ENCODE measurements at regions of chr15 and their contacts with region 1.

Region 1: GRCh38 chr15:66619151-66619903 is 53.5 kb upstream of the LCTL start:
- DNase-seq: peak; percentile 73 to 85 (median 77)
- ATAC-seq: peak; percentile 53 to 75 (median 72)
- H3K4me3 ChIP-seq: no peak overlapping the region
- H3K27ac ChIP-seq: peak overlapping the region in 11 of 12 donors; percentile 1 to 87 (median 70)
- H3K4me1 ChIP-seq: peaks cover 0 to 66% (median 38%) of the 10 kb centered on the region in 12 donors
- H3K27me3 ChIP-seq: peaks cover 0 to 10% (median 0%) of the 10 kb centered on the region in 9 donors
- CTCF ChIP-seq: peak; percentile 81 to 96 (median 92)
- POLR2A ChIP-seq: no peak

Region 2: GRCh38 chr15:66654739-66655375 is 35.5 kb after region 1 on chr15:
- intact Hi-C with region 1: loop called in 3 of 10 experiments (anchors 5 kb)
- DNase-seq: peak in 2 of 5 donors; percentile 51 to 58
- ATAC-seq: peak; percentile 9 to 70 (median 54)
- H3K4me3 ChIP-seq: peak overlapping the region in 11 of 12 donors; percentile 1 to 57 (median 40)
- H3K27ac ChIP-seq: peak overlapping the region in 11 of 12 donors; percentile 12 to 90 (median 54)
- H3K4me1 ChIP-seq: peaks cover 0 to 59% (median 25%) of the 10 kb centered on the region in 12 donors
- H3K27me3 ChIP-seq: no peaks in the 10 kb centered on the region
- CTCF ChIP-seq: no peak
- POLR2A ChIP-seq: no peak

Region 3: GRCh38 chr15:66661432-66662096 is 42.2 kb after region 1 on chr15:
- intact Hi-C with region 1: loop called in 3 of 10 experiments (anchors 5 kb)
- DNase-seq: peak; percentile 64 to 84 (median 82)
- ATAC-seq: peak; percentile 82 to 95 (median 88)
- H3K4me3 ChIP-seq: no peak overlapping the region
- H3K27ac ChIP-seq: peak overlapping the region; percentile 50 to 94 (median 86)
- H3K4me1 ChIP-seq: peaks cover 0 to 50% (median 11%) of the 10 kb centered on the region in 12 donors
- H3K27me3 ChIP-seq: no peaks in the 10 kb centered on the region
- CTCF ChIP-seq: no peak
- POLR2A ChIP-seq: peak in 1 of 2 donors; percentile 32

Region 4: DNA sequence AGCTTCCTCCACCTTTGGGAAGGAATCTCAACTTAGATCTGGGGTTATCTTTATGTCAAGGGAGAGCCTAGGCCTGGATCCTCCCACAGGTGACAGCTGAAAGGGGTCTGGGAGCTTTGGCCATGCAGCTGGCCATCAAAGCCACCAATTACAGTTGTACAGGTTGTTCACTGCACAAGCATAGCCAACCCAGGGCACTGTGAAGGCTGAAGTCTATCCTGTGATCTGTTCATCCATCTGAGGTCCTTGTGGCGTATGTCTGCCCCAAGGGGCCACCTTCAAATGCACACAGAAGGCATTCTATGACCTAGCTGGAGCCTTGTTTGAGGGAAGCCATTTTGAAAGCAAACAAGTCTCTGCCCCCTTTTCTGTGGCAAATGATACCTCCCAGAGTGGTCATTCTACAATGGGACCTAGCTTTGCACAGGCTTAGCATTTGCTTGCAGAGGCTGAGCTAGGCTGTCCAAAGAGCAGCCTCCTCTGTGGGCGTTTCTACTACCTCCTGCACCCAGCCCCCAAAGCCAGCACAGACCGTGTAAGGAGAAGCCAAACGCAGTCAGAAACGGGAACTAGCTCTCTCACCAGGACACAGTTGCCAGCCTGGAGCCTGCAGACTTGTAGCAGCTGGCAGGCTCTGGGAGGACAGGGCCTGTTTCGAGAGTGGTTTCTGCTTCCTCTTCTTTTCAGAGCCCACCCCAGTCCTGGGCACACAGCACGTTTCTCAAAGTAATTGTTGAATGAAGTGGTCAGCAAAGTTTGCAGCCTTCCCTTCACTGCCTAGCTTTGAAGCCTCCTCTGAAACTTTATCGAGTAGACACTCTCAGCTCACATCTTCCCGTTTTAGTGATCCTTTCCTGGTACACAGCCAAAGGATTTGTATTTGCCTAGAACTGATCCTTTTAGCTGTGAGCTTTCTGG is 288.8 kb after region 1 on chr15:
- intact Hi-C with region 1: no loop called
- DNase-seq: peak in 4 of 5 donors; percentile 49 to 82 (median 54)
- ATAC-seq: peak; percentile 49 to 82 (median 75)
- H3K4me3 ChIP-seq: no peak overlapping the region
- H3K27ac ChIP-seq: peak overlapping the region in 3 of 12 donors; percentile 52 to 73 (median 71)
- H3K4me1 ChIP-seq: peaks cover 0 to 34% (median 5%) of the 10 kb centered on the region in 12 donors
- H3K27me3 ChIP-seq: no peaks in the 10 kb centered on the region
- CTCF ChIP-seq: no peak
- POLR2A ChIP-seq: no peak

Measured in heart left ventricle (tissue), 16 donors.